ENCODE measurements at regions of chr20 and their contacts with region 1.

Region 1: GRCh38 chr20:49979030-49979832 is 3.5 kb upstream of the SNAI1 start:
- DNase-seq: peak in 1 of 2 donors; percentile 68
- H3K4me3 ChIP-seq: peak overlapping the region in 1 of 2 donors; percentile 30
- H3K27ac ChIP-seq: no peak overlapping the region
- H3K4me1 ChIP-seq: peaks cover 0 to 29% (median 24%) of the 10 kb centered on the region in 4 donors
- H3K27me3 ChIP-seq: no peaks in the 10 kb centered on the region
- CTCF ChIP-seq: peak; percentile 99 to 100

Region 2: DNA sequence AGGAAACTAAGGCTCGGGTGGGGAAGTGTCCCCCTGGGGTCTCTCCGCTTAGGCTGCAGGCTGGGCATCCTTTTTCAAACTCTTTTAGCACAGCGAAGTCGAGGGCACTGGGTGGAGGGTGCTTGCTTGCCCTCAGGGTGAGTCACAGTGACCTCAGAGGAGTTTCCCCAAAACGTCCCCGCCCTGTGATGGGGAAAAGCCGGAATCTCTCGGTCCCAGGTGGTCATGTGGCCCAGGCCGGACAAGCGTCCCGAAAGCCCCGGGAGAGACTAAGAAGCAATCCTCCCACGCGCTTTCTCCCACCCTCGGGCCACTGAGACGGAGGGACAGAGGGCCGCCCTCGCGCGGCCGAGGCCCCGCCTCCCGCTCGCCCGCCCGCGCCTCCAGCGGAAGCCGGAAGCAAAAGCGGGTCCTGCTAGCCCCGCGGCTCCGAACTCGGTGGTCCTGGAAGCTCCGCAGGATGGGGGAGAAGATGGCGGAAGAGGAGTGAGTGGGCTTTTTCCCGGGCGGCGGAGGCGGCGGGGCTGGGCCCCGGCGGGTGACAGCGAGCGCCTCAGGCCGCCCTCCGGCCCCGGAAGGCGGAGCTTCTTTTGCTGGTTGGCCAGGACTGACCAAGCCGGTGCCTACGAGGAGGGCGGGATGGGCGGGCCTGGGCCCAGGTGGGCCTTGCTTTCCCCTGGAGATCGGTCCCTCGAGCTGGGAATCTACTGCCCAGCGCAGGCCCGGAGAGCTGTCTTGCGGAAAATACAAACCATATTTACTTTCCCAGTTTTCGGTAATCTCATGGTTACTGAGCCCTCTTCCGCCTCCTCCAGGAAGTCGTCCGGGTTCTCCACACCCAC is 166.5 kb before region 1 on chr20 and contains the start of gene SLC9A8:
- intact Hi-C with region 1: no loop called
- DNase-seq: peak; percentile 92 to 94
- H3K4me3 ChIP-seq: peak within 1 kb of the TSS; percentile 60 to 71
- H3K27ac ChIP-seq: peak within 1 kb of the TSS; percentile 84 to 95
- H3K4me1 ChIP-seq: peaks cover 0 to 19% (median 15%) of the 10 kb centered on the region in 4 donors
- H3K27me3 ChIP-seq: no peaks in the 10 kb centered on the region
- CTCF ChIP-seq: peak; percentile 42 to 52

Region 3: DNA sequence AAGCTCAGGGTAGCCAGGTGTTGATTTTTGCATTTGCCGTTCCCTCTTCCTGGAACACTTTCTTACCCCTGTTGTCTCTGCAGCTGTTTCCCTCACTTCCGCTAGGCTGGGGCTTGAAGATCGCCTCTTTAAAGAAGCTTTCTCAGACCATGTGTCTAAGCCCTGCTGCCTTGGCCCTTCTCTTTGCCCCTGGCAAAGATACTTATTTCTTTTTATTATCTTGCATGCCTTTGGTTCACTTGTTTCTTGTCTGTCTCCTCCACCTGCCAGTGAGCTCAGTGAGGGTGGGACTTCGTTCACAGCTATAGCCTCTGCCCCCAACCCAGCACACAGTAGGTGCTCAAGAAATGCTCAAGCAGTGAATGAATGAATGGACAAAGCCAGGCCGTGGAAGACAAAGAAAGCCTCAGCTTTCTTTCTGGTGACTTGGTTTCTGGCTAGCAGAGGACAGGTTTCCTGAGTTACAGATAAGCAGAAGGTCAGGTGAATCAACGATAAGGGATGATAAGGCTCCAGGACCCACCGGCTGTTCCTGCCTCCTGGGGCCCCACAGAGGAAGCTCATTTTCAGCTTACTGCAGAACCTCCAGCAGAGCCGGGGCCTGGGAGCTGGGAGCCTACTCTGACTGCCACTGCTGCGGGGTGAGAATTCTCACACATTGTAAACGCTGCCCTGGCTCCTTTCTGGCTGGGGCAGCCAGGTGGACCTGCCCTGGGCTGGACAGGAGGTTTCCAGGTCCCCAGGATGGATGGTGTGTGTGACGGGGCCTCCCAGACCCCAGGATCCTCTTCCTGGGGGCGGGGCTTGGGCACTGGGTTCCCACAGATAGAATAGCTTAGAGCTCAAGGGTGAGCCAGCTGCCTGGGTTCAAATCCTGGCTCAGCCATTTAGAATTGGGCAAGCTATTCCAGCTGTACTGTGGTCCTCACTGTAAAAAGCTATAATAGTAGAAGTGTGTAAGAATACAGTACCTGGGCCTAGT is 33.3 kb after region 1 on chr20:
- intact Hi-C with region 1: no loop called
- DNase-seq: no peak
- H3K4me3 ChIP-seq: no peak overlapping the region
- H3K27ac ChIP-seq: no peak overlapping the region
- H3K4me1 ChIP-seq: peaks cover 0 to 28% (median 11%) of the 10 kb centered on the region in 4 donors
- H3K27me3 ChIP-seq: peaks cover 0 to 3% of the 10 kb centered on the region in 2 donors
- CTCF ChIP-seq: no peak

Region 4: DNA sequence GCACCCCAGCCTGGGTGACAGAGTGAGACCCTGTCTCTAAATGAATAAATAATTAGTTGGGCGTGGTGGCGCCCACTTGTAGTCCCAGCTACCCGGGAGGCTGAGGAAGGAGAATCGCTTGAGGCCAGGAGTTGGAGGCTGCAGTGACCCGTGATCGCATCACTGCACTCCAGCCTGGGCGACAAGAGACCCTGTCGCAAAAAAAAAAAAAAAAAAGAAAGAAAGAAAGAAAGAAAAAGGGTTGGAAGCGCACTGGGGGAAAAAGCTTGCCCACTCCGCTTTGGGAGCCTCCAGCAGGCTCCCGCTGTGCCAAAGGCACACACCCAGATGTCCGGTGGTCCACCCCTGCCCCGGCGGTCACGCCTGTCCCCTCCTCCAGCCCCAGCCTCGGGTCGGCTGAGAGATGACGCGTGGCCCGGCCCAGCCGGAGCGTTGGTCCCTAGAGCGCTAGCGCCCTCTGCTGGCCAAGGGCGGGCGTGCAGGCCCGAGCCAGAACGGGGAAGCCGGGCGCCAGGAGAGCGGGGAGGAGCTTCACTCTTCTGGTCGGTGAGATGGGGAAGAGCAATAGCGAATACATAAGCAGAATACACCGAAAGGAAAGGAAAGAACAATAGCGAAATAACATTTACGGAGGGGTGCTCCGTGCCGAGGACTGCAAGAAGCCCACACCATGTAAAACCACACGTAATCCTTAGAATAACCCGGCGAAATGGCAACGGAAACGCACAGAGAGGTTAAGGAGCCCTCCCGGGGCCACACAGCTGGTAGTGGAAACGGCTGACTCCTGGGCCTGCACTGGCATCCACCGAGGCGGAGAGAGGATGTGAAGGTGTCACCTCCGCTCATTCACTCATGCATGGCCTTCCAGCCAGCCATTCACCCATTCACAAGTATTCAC is 92.0 kb after region 1 on chr20:
- intact Hi-C with region 1: loop called (anchors 1 kb)
- DNase-seq: peak; percentile 86 to 91
- H3K4me3 ChIP-seq: peak overlapping the region; percentile 28 to 32
- H3K27ac ChIP-seq: no peak overlapping the region
- H3K4me1 ChIP-seq: peaks cover 0 to 15% (median 5%) of the 10 kb centered on the region in 4 donors
- H3K27me3 ChIP-seq: peaks cover 0 to 19% of the 10 kb centered on the region in 2 donors
- CTCF ChIP-seq: peak; percentile 100

Region 5: DNA sequence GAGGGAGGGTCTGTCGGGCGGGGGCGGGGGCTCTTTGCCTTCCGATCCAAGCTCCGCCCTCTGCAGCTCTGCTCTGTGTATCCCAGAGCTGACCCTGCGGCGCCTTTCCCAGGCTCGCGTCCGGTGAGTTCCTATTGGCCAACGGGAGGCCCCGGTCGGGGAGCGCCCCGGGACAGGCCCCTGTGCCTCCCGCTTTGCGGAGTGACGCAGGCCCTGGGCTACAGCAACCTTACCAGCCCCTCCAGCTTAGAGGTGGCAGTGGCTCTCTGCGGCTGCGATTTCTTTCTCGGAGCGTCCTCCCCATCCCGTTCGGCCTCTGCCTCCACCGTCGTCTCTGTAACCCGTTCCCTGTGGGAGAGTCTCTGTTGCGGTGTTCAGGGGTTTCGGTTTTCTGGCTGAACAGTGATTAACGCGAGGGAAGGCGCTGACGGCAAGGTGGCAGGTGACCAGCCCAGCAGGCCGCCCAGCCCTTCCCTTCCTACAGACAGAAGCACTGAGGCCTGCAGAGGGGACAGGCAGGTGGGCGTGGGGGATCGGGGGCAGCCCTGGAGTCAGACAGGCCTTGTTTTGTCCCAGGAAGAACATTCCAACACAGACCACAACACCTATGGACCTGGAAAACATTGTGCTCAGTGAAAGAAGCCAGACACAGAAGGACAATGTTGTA is 193.2 kb after region 1 on chr20:
- intact Hi-C with region 1: loop called (anchors 10 kb)
- DNase-seq: peak; percentile 88 to 95
- H3K4me3 ChIP-seq: peak overlapping the region; percentile 57 to 61
- H3K27ac ChIP-seq: peak overlapping the region; percentile 82 to 87
- H3K4me1 ChIP-seq: peaks cover 0 to 28% (median 10%) of the 10 kb centered on the region in 4 donors
- H3K27me3 ChIP-seq: no peaks in the 10 kb centered on the region
- CTCF ChIP-seq: no peak